ENCODE measurements at regions of chr16 and their contacts with region 1.

Region 1: GRCh38 chr16:75110637-75111513 is 5.7 kb downstream of the LDHD start:
- DNase-seq: peak; percentile 55
- H3K4me3 ChIP-seq: peak overlapping the region; percentile 42
- CTCF ChIP-seq: peak; percentile 96

Region 2: GRCh38 chr16:74813109-74813641 is 297.7 kb before region 1 on chr16:
- CTCF ChIA-PET with region 1: interaction called, 11 read pairs
- POLR2A ChIA-PET with region 1: no interaction called
- DNase-seq: no peak
- H3K4me3 ChIP-seq: no peak overlapping the region
- CTCF ChIP-seq: peak; percentile 97

Region 3: GRCh38 chr16:74998481-74999218 is 112.2 kb before region 1 on chr16 and contains the start of gene ZNRF1:
- CTCF ChIA-PET with region 1: interaction called, 450 read pairs
- POLR2A ChIA-PET with region 1: interaction called, 6 read pairs
- DNase-seq: no peak
- H3K4me3 ChIP-seq: peak within 1 kb of the TSS; percentile 61
- CTCF ChIP-seq: peak; percentile 78

Region 4: GRCh38 chr16:75019007-75019406 is 91.9 kb before region 1 on chr16:
- CTCF ChIA-PET with region 1: interaction called, 18 read pairs
- POLR2A ChIA-PET with region 1: no interaction called
- DNase-seq: no peak
- H3K4me3 ChIP-seq: no peak overlapping the region
- CTCF ChIP-seq: no peak

Region 5: GRCh38 chr16:75087375-75087979 is 23.4 kb before region 1 on chr16:
- CTCF ChIA-PET with region 1: interaction called, 23 read pairs
- POLR2A ChIA-PET with region 1: no interaction called
- DNase-seq: no peak
- H3K4me3 ChIP-seq: no peak overlapping the region
- CTCF ChIP-seq: no peak

Region 6: GRCh38 chr16:75121949-75122568 is 11.2 kb after region 1 on chr16:
- CTCF ChIA-PET with region 1: interaction called, 50 read pairs
- POLR2A ChIA-PET with region 1: no interaction called
- DNase-seq: no peak
- H3K4me3 ChIP-seq: no peak overlapping the region
- CTCF ChIP-seq: no peak